Aorta (tissue), 5 donors: ENCODE measurements at regions of chr7 and their contacts with region 1.

Region 1: DNA sequence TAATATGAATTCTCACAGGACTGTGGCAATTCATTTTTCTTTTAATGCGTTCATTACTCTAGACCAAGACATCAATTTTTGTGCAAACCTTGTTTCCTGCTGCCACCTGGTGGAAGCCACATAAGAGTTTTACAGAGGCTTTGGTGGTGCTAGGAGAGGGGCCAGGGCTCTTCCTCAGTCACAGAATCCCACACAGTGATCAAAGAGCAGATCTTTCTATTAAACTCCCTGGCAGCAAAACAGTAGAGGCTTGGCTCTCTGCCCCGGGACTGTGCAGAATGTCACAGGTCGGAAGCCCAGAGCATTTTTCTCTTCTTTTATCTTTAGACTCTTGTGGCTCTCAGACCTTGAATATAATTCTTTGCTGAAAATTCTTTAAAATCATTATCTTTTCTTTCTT is 506.4 kb upstream of the C7orf33 start:
- DNase-seq: peak in 1 of 2 donors; percentile 45
- ATAC-seq: peak; percentile 76
- H3K4me3 ChIP-seq: no peak overlapping the region
- H3K27ac ChIP-seq: no peak overlapping the region
- H3K4me1 ChIP-seq: no peaks in the 10 kb centered on the region
- H3K27me3 ChIP-seq: no peaks in the 10 kb centered on the region

Region 2: GRCh38 chr7:147245292-147245691 is 838.8 kb before region 1 on chr7:
- intact Hi-C with region 1: loop called in 1 of 2 experiments (anchors 10 kb)
- DNase-seq: no peak
- ATAC-seq: no peak
- H3K4me3 ChIP-seq: no peak overlapping the region
- H3K27ac ChIP-seq: no peak overlapping the region
- H3K4me1 ChIP-seq: no peaks in the 10 kb centered on the region
- H3K27me3 ChIP-seq: no peaks in the 10 kb centered on the region

Region 3: GRCh38 chr7:148135116-148135515 is 51.0 kb after region 1 on chr7:
- intact Hi-C with region 1: no loop called
- DNase-seq: no peak
- ATAC-seq: no peak
- H3K4me3 ChIP-seq: no peak overlapping the region
- H3K27ac ChIP-seq: no peak overlapping the region
- H3K4me1 ChIP-seq: no peaks in the 10 kb centered on the region
- H3K27me3 ChIP-seq: peaks cover 0 to 5% of the 10 kb centered on the region in 2 donors